Heart right ventricle (tissue), 16 donors: ENCODE measurements at regions of chr18 and their contacts with region 1.

Region 1: GRCh38 chr18:63074981-63075404 is 244.6 kb downstream of the BCL2 start:
- DNase-seq: peak; percentile 78 to 82
- ATAC-seq: peak; percentile 91 to 99 (median 97)
- H3K4me3 ChIP-seq: peak overlapping the region in 9 of 10 donors; percentile 26 to 57 (median 52)
- H3K27ac ChIP-seq: peak overlapping the region in 9 of 10 donors; percentile 23 to 73 (median 56)
- H3K4me1 ChIP-seq: peaks cover 0 to 14% (median 0%) of the 10 kb centered on the region in 9 donors
- H3K27me3 ChIP-seq: no peaks in the 10 kb centered on the region
- CTCF ChIP-seq: peak in 2 of 9 donors; percentile 11 to 18

Region 2: GRCh38 chr18:62663731-62664336 is 411.2 kb before region 1 on chr18:
- intact Hi-C with region 1: no loop called
- DNase-seq: peak in 1 of 2 donors; percentile 21
- ATAC-seq: peak; percentile 44 to 83 (median 68)
- H3K4me3 ChIP-seq: no peak overlapping the region
- H3K27ac ChIP-seq: no peak overlapping the region
- H3K4me1 ChIP-seq: peaks cover 0 to 9% (median 0%) of the 10 kb centered on the region in 9 donors
- H3K27me3 ChIP-seq: no peaks in the 10 kb centered on the region
- CTCF ChIP-seq: no peak

Region 3: DNA sequence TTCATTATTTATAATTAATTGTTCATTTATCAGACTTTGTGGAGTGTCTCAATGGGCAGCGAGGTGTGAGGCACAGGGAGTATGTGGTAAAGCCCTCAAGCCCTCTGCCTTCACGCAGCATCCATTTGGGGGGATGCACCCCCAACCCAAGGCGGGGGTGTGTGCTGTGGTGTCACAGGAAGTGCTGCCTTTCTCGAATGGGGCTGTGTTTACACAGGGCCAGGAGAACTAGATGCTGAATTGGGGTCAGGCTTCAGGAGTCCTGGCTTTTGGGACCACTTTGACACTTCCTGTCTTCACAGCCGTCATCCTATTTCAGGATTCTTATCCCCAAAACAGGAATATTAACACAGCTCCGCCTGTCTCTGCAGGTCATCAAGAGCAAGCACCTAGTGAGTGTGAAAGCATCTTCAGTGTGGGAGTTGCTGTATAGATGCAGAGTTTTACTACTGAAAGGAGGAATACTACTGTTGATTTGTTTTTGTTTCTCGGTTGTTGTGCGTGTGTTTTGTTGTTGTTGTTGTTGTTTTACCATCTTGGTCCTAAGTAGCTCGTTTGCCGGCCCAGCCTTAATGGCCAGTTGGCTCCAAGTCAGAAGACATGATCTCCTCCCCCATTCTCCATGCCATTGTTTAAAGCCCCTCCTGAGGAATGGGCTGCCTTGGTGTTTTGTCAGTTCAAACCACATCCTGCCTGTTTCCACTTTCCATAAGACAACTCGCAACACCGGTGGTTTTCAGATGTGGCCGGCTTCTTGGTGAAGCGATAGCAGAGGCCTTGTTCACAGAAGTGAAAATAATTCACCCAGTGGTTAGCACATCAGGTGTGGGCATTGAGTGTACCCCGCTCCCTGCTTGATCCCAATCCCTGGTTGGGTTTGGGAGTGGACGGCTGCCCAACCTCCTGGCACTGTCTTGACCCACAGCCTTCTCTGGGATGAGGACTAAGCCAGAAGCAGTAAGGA is 23.3 kb after region 1 on chr18:
- intact Hi-C with region 1: loop called in 1 of 10 experiments (anchors 2 kb)
- DNase-seq: no peak
- ATAC-seq: no peak
- H3K4me3 ChIP-seq: no peak overlapping the region
- H3K27ac ChIP-seq: no peak overlapping the region
- H3K4me1 ChIP-seq: peaks cover 0 to 33% (median 16%) of the 10 kb centered on the region in 9 donors
- H3K27me3 ChIP-seq: peaks cover 0 to 3% (median 0%) of the 10 kb centered on the region in 7 donors
- CTCF ChIP-seq: no peak

Region 4: GRCh38 chr18:63237881-63238667 is 163.1 kb after region 1 on chr18:
- intact Hi-C with region 1: no loop called
- DNase-seq: peak in 1 of 2 donors; percentile 47
- ATAC-seq: peak; percentile 62 to 84 (median 78)
- H3K4me3 ChIP-seq: peak overlapping the region in 4 of 10 donors; percentile 4 to 28 (median 14)
- H3K27ac ChIP-seq: peak overlapping the region; percentile 11 to 89 (median 76)
- H3K4me1 ChIP-seq: peaks cover 5 to 46% (median 25%) of the 10 kb centered on the region in 9 donors
- H3K27me3 ChIP-seq: no peaks in the 10 kb centered on the region
- CTCF ChIP-seq: no peak